A673 (cell line): ENCODE measurements at regions of chr11 and their contacts with region 1.

Region 1: GRCh38 chr11:105862736-105863367 is 159.2 kb downstream of the MSANTD4 start:
- DNase-seq: peak; percentile 76
- H3K4me3 ChIP-seq: no peak overlapping the region
- H3K27ac ChIP-seq: no peak overlapping the region
- H3K4me1 ChIP-seq: no peaks in the 10 kb centered on the region
- H3K27me3 ChIP-seq: peaks cover 15% of the 10 kb centered on the region
- CTCF ChIP-seq: peak; percentile 73

Region 2: GRCh38 chr11:104254347-104254746 is 1608.5 kb before region 1 on chr11:
- CTCF ChIA-PET with region 1: interaction called, 5 read pairs
- POLR2A ChIA-PET with region 1: no interaction called
- intact Hi-C with region 1: loop called (anchors 2 kb)
- DNase-seq: peak; percentile 81
- H3K4me3 ChIP-seq: no peak overlapping the region
- H3K27ac ChIP-seq: no peak overlapping the region
- H3K4me1 ChIP-seq: no peaks in the 10 kb centered on the region
- H3K27me3 ChIP-seq: no peaks in the 10 kb centered on the region
- CTCF ChIP-seq: peak; percentile 93

Region 3: GRCh38 chr11:104609311-104610085 is 1253.4 kb before region 1 on chr11:
- CTCF ChIA-PET with region 1: no interaction called
- POLR2A ChIA-PET with region 1: no interaction called
- intact Hi-C with region 1: loop called (anchors 5 kb)
- DNase-seq: peak; percentile 85
- H3K4me3 ChIP-seq: no peak overlapping the region
- H3K27ac ChIP-seq: peak overlapping the region; percentile 27
- H3K4me1 ChIP-seq: peaks cover 17% of the 10 kb centered on the region
- H3K27me3 ChIP-seq: no peaks in the 10 kb centered on the region
- CTCF ChIP-seq: peak; percentile 88

Region 4: DNA sequence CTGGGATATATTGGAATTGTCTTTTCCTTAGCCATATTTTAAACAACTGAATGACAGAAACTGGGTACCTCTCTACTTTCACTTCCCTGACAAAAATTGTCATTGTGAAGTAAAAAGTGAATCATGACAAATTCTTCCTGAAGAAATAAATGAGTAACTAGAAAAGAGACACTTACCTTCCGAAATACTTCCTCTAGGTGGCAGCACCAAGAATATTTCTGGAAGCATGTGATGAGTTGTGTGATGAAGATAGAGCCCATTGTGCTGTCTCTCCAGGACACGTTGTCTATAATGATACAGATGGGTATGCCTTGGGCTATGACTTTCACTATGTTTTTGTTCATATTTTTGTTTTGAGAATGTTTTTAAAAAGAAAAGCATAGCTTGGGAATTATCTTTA is 915.9 kb before region 1 on chr11:
- CTCF ChIA-PET with region 1: no interaction called
- POLR2A ChIA-PET with region 1: no interaction called
- intact Hi-C with region 1: loop called (anchors 5 kb)
- DNase-seq: peak; percentile 84
- H3K4me3 ChIP-seq: no peak overlapping the region
- H3K27ac ChIP-seq: no peak overlapping the region
- H3K4me1 ChIP-seq: no peaks in the 10 kb centered on the region
- H3K27me3 ChIP-seq: no peaks in the 10 kb centered on the region
- CTCF ChIP-seq: peak; percentile 78

Region 5: DNA sequence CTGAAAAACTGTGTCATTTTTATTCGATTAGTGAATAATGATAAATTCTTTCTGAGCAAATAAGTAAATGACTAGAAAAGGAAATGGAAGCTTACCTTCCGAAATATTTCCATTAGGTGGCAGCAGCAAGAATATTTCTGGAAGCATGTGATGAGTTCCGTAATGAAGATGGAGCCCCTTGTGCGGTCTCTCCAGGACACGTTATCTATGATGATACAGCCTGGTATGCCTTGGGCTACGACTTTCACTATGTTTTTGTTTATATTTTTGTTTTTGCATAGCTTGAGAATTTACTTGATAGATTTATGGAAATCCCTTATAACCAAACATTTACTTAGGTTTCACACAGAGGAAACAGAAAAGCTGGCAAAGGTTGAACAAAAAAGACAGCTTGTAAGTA is 865.6 kb before region 1 on chr11:
- CTCF ChIA-PET with region 1: no interaction called
- POLR2A ChIA-PET with region 1: no interaction called
- intact Hi-C with region 1: loop called (anchors 5 kb)
- DNase-seq: peak; percentile 74
- H3K4me3 ChIP-seq: no peak overlapping the region
- H3K27ac ChIP-seq: no peak overlapping the region
- H3K4me1 ChIP-seq: no peaks in the 10 kb centered on the region
- H3K27me3 ChIP-seq: no peaks in the 10 kb centered on the region
- CTCF ChIP-seq: peak; percentile 62

Region 6: GRCh38 chr11:105297463-105297862 is 565.4 kb before region 1 on chr11:
- CTCF ChIA-PET with region 1: no interaction called
- POLR2A ChIA-PET with region 1: no interaction called
- intact Hi-C with region 1: no loop called
- DNase-seq: peak; percentile 45
- H3K4me3 ChIP-seq: no peak overlapping the region
- H3K27ac ChIP-seq: no peak overlapping the region
- H3K4me1 ChIP-seq: no peaks in the 10 kb centered on the region
- H3K27me3 ChIP-seq: no peaks in the 10 kb centered on the region
- CTCF ChIP-seq: no peak

Region 7: GRCh38 chr11:106021967-106022794 is 159.3 kb after region 1 on chr11 and contains the start of gene MSANTD4:
- CTCF ChIA-PET with region 1: no interaction called
- POLR2A ChIA-PET with region 1: no interaction called
- intact Hi-C with region 1: no loop called
- DNase-seq: peak; percentile 100
- H3K4me3 ChIP-seq: peak within 1 kb of the TSS; percentile 81
- H3K27ac ChIP-seq: peak within 1 kb of the TSS; percentile 51
- H3K4me1 ChIP-seq: peaks cover 10% of the 10 kb centered on the region
- H3K27me3 ChIP-seq: no peaks in the 10 kb centered on the region
- CTCF ChIP-seq: no peak
- total RNA-seq, gene MSANTD4: 25.6 and 27.7 TPM in 2 replicates

Region 8: GRCh38 chr11:106047636-106048035 is 184.8 kb after region 1 on chr11:
- CTCF ChIA-PET with region 1: no interaction called
- POLR2A ChIA-PET with region 1: no interaction called
- intact Hi-C with region 1: no loop called
- DNase-seq: no peak
- H3K4me3 ChIP-seq: no peak overlapping the region
- H3K27ac ChIP-seq: no peak overlapping the region
- H3K4me1 ChIP-seq: peaks cover 11% of the 10 kb centered on the region
- H3K27me3 ChIP-seq: no peaks in the 10 kb centered on the region
- CTCF ChIP-seq: no peak